ENCODE measurements at regions of chr3 and their contacts with region 1.

Region 1: DNA sequence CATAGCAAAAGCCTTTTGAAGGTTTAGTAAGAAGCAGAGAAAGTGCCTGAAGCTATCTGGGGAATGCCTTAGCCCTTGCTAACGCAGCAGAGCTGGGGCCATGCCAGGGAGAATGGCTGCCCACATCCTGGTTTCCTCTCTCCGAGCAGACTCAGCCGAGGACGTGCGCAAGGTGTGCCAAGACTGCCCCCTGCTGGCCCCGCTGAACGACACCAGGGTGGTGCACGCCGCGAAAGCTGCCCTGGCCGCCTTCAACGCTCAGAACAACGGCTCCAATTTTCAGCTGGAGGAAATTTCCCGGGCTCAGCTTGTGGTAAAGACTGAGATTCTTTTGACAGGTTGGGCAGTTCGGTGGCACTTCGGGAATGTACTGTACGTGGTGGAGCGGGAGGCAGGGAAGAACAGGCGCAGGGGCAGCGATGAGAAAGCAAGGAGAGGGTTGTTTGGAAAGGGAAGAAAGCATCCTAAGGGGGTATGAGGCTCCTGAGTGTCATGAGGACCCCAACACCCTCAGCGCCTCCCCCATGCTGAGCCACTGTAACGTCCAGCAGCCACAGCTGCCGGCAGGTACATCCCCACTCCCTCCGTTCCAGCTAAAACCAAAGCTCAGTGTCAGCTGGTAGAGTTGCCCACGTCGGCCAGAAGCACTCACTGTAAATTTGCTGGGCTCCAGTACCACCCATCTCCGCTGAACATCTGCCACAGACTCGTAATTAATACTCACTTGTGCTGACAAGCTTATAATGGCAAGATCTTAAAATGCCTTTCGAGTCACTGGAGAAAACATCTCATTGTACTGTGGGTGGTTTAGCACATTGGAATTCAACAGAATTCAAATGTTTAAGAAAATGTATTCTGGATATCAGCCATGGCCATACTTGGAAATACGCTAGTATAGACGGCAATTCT is 4.4 kb downstream of the AHSG start:
- DNase-seq: peak; percentile 82
- ATAC-seq: peak; percentile 95
- H3K4me3 Mint-ChIP-seq: peak overlapping the region; percentile 58
- H3K27ac Mint-ChIP-seq: no peak overlapping the region
- H3K4me1 Mint-ChIP-seq: peaks cover 18% of the 10 kb centered on the region
- H3K27me3 Mint-ChIP-seq: peaks cover 25% of the 10 kb centered on the region
- CTCF ChIP-seq: peak; percentile 86

Region 2: GRCh38 chr3:186570096-186570940 is 47.0 kb before region 1 on chr3 and contains the start of gene DNAJB11:
- CTCF ChIA-PET with region 1: interaction called, 11 read pairs
- POLR2A ChIA-PET with region 1: interaction called, 4 read pairs
- DNase-seq: peak; percentile 99
- ATAC-seq: peak; percentile 89
- H3K4me3 Mint-ChIP-seq: peak within 1 kb of the TSS; percentile 88
- H3K27ac Mint-ChIP-seq: peak within 1 kb of the TSS; percentile 98
- H3K4me1 Mint-ChIP-seq: peaks cover 31% of the 10 kb centered on the region
- H3K27me3 Mint-ChIP-seq: no peaks in the 10 kb centered on the region
- CTCF ChIP-seq: no peak
- total RNA-seq, gene DNAJB11: 44.2 to 56.3 TPM (median 47.8 TPM) in 3 replicates

Region 3: DNA sequence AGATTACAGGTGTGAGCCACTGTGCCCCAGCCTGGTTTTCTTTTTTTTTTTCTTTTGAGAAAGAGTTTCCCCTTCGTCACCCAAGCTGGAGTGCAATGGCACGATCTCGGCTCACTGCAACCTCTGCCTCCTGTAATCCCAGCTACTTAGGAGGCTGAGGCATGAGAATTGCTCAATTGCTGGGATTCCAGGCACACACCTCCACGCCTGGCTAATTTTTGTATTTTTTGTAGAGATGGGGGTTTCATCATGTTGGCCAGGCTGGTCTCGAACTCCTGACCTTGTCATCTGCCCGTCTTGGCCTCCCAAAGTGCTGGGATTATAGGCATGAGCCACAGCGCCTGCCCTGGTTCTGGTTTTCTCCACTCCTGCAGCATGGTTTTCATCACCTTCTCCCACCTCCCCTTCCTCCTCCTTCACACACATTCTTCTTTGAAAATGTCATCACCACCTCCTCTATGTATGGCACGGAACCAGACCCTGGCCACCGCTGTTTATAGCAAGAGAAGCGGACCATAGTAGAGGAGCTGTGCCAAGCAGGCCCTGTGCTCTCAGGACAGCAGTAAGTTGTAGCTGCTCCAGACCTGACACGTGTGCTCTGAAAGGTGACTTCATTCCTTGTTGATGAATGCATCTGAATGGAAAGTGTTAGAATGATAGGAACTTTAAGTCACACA is 19.0 kb before region 1 on chr3:
- CTCF ChIA-PET with region 1: interaction called, 87 read pairs
- POLR2A ChIA-PET with region 1: interaction called, 6 read pairs
- DNase-seq: no peak
- ATAC-seq: no peak
- H3K4me3 Mint-ChIP-seq: no peak overlapping the region
- H3K27ac Mint-ChIP-seq: no peak overlapping the region
- H3K4me1 Mint-ChIP-seq: peaks cover 6% of the 10 kb centered on the region
- H3K27me3 Mint-ChIP-seq: peaks cover 6% of the 10 kb centered on the region; the same call in 1 of the 2 replicates
- CTCF ChIP-seq: no peak

Region 4: DNA sequence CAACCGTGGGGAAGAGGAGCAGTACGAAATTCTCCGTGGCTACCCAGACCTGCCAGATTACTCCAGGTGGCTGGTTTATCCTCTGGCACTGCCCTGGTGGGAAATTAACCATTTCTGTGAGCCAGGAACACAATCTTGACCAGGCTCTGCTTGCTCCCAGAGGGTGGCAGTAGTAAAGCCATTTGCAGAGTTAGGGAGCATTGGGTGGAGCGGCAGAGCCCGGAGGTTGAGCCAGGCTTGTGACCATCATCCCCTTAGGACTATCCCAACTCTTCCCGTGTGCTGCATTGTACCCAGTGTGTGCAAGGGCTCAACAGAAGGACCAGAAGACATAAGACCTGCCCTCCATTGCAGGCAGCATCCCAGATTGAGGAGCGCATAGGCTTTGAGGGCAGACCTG is 105.2 kb after region 1 on chr3:
- CTCF ChIA-PET with region 1: interaction called, 17 read pairs
- POLR2A ChIA-PET with region 1: no interaction called
- DNase-seq: peak; percentile 32
- ATAC-seq: peak; percentile 96
- H3K4me3 Mint-ChIP-seq: no peak overlapping the region
- H3K27ac Mint-ChIP-seq: no peak overlapping the region
- H3K4me1 Mint-ChIP-seq: peaks cover 11% of the 10 kb centered on the region
- H3K27me3 Mint-ChIP-seq: no peaks in the 10 kb centered on the region
- CTCF ChIP-seq: no peak

Region 5: DNA sequence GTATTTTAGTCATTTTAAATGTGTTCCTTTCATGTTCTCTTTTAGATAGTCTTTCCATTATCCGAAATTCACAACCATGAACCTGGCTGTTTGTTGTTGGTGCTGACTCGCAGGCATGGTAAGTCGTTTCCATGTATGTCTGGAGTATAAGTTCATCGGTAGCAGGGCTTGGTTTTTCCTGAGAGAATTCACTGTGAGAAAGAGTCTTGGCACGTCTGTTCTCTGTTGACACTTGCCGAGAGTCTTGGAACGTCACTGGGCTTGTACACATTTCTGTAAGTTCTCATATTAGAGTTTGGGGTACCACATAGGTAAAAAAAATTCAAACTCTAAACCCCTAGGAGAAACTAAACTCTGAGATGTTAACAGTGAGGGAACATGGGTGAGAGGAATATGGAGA is 136.7 kb after region 1 on chr3:
- CTCF ChIA-PET with region 1: interaction called, 81 read pairs
- POLR2A ChIA-PET with region 1: no interaction called
- DNase-seq: no peak
- ATAC-seq: no peak
- H3K4me3 Mint-ChIP-seq: no peak overlapping the region
- H3K27ac Mint-ChIP-seq: no peak overlapping the region
- H3K4me1 Mint-ChIP-seq: peaks cover 22% of the 10 kb centered on the region
- H3K27me3 Mint-ChIP-seq: no peaks in the 10 kb centered on the region; the same call in 1 of the 2 replicates
- CTCF ChIP-seq: no peak

Region 6: DNA sequence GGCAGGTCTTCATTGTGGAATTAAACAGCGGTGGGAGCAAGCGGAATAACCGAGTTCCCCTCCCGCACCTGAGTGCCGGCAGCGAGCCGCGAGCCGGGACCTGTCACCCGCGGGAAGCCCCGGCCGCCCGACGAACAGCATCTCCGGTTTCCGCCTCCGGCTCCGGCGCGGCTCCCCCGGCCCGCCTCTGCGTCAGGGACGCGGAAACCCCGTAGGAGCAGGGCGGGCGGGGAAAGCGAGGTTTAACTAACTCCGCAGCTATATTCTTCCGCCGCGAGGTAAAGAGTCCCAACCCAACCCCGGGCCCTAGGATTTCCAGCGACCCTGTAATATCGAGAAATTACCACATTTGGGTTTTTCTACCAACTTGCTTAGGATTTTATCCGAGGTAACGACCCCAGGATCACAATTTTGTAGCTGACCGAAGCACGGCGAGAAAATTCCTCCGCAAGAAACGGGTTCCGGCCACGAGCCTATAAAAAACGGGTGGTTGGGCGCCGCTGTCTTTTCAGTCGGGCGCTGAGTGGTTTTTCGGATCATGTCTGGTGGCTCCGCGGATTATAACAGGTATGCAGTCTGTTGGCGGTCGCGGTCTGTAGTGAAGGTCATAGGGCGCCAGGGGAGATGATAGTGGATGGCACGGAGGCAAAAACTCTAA is 165.9 kb after region 1 on chr3 and contains the start of gene EIF4A2:
- CTCF ChIA-PET with region 1: interaction called, 7 read pairs
- POLR2A ChIA-PET with region 1: interaction called, 14 read pairs
- DNase-seq: peak; percentile 88
- ATAC-seq: peak; percentile 73
- H3K4me3 Mint-ChIP-seq: peak within 1 kb of the TSS; percentile 100
- H3K27ac Mint-ChIP-seq: peak within 1 kb of the TSS; percentile 100
- H3K4me1 Mint-ChIP-seq: peaks cover 40% of the 10 kb centered on the region
- H3K27me3 Mint-ChIP-seq: peaks cover 9% of the 10 kb centered on the region; the same call in 1 of the 2 replicates
- CTCF ChIP-seq: no peak
- total RNA-seq, gene EIF4A2: 571 to 574 TPM (median 572 TPM) in 3 replicates

Measured in WTC11 (cell line).